ENCODE measurements at regions of chr5 and their contacts with region 1.

Region 1: GRCh38 chr5:160342403-160342941 is 28.0 kb downstream of the C1QTNF2 start:
- DNase-seq: no peak
- H3K4me3 ChIP-seq: no peak overlapping the region
- H3K27ac ChIP-seq: no peak overlapping the region
- H3K4me1 ChIP-seq: no peaks in the 10 kb centered on the region
- H3K27me3 ChIP-seq: no peaks in the 10 kb centered on the region
- CTCF ChIP-seq: no peak
- POLR2A ChIP-seq: no peak

Region 2: DNA sequence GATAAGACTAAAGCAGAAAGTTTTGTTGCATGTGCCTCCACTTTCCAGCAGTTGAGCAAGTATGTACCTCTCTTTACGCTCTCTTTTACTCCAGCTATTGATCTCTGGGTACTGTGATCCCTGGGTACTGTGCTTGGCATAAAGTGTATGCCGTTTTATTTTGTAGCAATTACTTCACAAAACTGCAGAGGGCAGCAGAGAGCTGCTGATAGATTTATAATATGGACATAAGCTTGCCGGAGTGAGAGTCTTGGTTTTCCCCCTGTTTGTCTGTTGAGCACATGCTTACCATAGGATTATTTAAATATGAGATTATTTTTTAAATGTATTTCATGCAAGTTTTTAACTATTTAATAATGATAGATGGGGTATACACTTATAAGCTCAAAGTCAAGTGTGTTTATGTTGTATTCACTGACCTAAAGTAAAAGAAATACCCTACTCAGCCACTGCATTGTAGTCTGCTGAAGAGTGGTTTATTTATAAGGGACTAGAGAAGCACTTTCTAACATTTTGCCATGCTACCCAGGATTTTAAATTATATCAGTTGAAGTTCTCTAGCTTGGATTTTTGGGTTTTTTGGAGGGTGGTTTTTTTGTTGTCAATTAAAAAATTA is 320.5 kb before region 1 on chr5:
- intact Hi-C with region 1: loop called (anchors 5 kb)
- DNase-seq: peak; percentile 37 to 42
- H3K4me3 ChIP-seq: no peak overlapping the region
- H3K27ac ChIP-seq: no peak overlapping the region
- H3K4me1 ChIP-seq: no peaks in the 10 kb centered on the region
- H3K27me3 ChIP-seq: no peaks in the 10 kb centered on the region
- CTCF ChIP-seq: peak; percentile 71 to 84 (median 80)
- POLR2A ChIP-seq: no peak

Region 3: GRCh38 chr5:160199410-160199911 is 143.0 kb before region 1 on chr5:
- intact Hi-C with region 1: loop called (anchors 10 kb)
- DNase-seq: peak; percentile 37 to 74
- H3K4me3 ChIP-seq: peak overlapping the region; percentile 11 to 30
- H3K27ac ChIP-seq: no peak overlapping the region
- H3K4me1 ChIP-seq: no peaks in the 10 kb centered on the region
- H3K27me3 ChIP-seq: no peaks in the 10 kb centered on the region
- CTCF ChIP-seq: peak; percentile 74 to 93 (median 90)
- POLR2A ChIP-seq: peak in 1 of 2 donors; percentile 27

Region 4: GRCh38 chr5:160390787-160391696 is 48.6 kb after region 1 on chr5:
- intact Hi-C with region 1: no loop called
- DNase-seq: no peak
- H3K4me3 ChIP-seq: no peak overlapping the region
- H3K27ac ChIP-seq: no peak overlapping the region
- H3K4me1 ChIP-seq: no peaks in the 10 kb centered on the region
- H3K27me3 ChIP-seq: no peaks in the 10 kb centered on the region
- CTCF ChIP-seq: peak in 3 of 4 experiments; percentile 33 to 40 (median 36)
- POLR2A ChIP-seq: no peak